Activated T-helper 1 cell treated with anti-CD3 and anti-CD28 coated beads, Interleukin-12 subunit alpha, Interleukin-12 subunit beta, Interleukin-2, Interleukin-4 antibody, amounts not matched to agents 30 ng/mL and 10 ng/mL and 1 ng/mL, durations not matched to agents 14 hours and 24 hours and 36 hours (primary cell): ENCODE measurements at regions of chr4 and their contacts with region 1.

Region 1: GRCh38 chr4:159487284-159487747 is 384.4 kb downstream of the RAPGEF2 start:
- DNase-seq: no peak
- H3K4me3 Mint-ChIP-seq: no peak overlapping the region
- H3K27ac Mint-ChIP-seq: no peak overlapping the region
- H3K4me1 Mint-ChIP-seq: no peaks in the 10 kb centered on the region
- H3K27me3 Mint-ChIP-seq: peaks cover 3% of the 10 kb centered on the region

Region 2: GRCh38 chr4:159787901-159788300 is 300.6 kb after region 1 on chr4:
- intact Hi-C with region 1: no loop called
- DNase-seq: no peak
- H3K4me3 Mint-ChIP-seq: no peak overlapping the region
- H3K27ac Mint-ChIP-seq: no peak overlapping the region
- H3K4me1 Mint-ChIP-seq: no peaks in the 10 kb centered on the region
- H3K27me3 Mint-ChIP-seq: no peaks in the 10 kb centered on the region

Region 3: GRCh38 chr4:159946983-159947615 is 459.8 kb after region 1 on chr4:
- intact Hi-C with region 1: loop called (anchors 1 kb)
- DNase-seq: no peak
- H3K4me3 Mint-ChIP-seq: no peak overlapping the region
- H3K27ac Mint-ChIP-seq: no peak overlapping the region
- H3K4me1 Mint-ChIP-seq: no peaks in the 10 kb centered on the region
- H3K27me3 Mint-ChIP-seq: no peaks in the 10 kb centered on the region